ENCODE measurements at regions of chr5 and their contacts with region 1.

Region 1: DNA sequence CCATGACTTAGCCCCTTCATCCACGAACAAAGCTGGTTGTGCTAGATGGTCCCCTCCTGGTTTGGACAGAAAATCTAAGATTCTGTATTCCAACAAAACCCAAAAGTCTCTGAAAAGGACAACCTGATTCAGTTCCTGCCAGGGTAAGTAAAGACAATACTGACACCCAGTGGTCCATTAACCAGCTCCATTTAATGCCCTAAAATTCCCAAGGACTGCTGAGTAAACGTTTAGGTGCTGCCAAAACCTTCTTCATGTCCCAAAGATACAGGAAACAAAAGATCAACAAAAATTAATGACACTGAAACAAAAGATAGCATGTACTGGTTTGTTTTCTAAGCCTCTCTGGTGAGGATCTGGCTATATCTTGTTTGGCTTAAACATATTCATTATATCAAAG is 25.3 kb upstream of the PPP1R2B start:
- DNase-seq: no peak
- H3K4me3 ChIP-seq: no peak overlapping the region
- H3K27ac ChIP-seq: no peak overlapping the region
- H3K4me1 ChIP-seq: no peaks in the 10 kb centered on the region
- H3K27me3 ChIP-seq: no peaks in the 10 kb centered on the region
- CTCF ChIP-seq: peak; percentile 8 to 52 (median 34)
- EP300 ChIP-seq: no peak
- POLR2A ChIP-seq: no peak

Region 2: GRCh38 chr5:155943516-155944407 is 881.0 kb before region 1 on chr5:
- intact Hi-C with region 1: loop called (anchors 2 kb)
- DNase-seq: no peak
- H3K4me3 ChIP-seq: no peak overlapping the region
- H3K27ac ChIP-seq: no peak overlapping the region
- H3K4me1 ChIP-seq: no peaks in the 10 kb centered on the region
- H3K27me3 ChIP-seq: no peaks in the 10 kb centered on the region
- CTCF ChIP-seq: peak; percentile 15 to 81 (median 71)
- EP300 ChIP-seq: no peak
- POLR2A ChIP-seq: no peak

Region 3: GRCh38 chr5:156879665-156880285 is 55.0 kb after region 1 on chr5:
- intact Hi-C with region 1: no loop called
- DNase-seq: no peak
- H3K4me3 ChIP-seq: no peak overlapping the region
- H3K27ac ChIP-seq: no peak overlapping the region
- H3K4me1 ChIP-seq: no peaks in the 10 kb centered on the region
- H3K27me3 ChIP-seq: no peaks in the 10 kb centered on the region
- CTCF ChIP-seq: no peak
- EP300 ChIP-seq: no peak
- POLR2A ChIP-seq: no peak

Region 4: DNA sequence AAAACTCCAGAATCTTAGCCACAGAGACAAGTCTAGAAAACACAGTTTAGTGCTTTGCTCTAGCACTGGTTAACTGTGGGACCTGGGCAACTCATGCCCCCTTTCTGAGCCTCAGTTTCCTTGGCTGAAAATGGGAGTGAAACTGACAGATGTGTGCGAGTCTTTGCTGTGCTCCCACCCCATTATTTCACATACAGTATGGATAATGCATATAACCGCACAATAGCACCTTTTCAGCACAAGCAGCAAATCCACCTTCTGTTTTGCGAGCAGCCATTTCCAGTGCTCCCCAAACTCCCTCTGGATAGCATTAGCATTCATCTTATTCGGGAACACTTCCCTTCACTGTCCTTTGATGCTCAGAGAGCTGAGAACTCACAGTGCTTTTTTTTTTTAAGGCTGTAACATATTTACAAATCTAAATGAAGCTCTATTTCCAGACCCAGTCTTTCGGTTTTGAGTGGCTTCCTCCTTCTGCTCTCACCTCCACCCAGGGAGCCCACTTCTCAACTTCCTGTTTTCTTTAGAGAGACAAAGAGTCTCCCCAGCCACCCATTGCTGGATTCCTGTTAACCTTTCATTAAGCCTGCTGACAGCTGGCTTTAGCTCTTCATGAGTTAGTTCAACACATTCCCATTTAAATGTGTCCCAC is 89.0 kb after region 1 on chr5:
- intact Hi-C with region 1: no loop called
- DNase-seq: no peak
- H3K4me3 ChIP-seq: no peak overlapping the region
- H3K27ac ChIP-seq: no peak overlapping the region
- H3K4me1 ChIP-seq: no peaks in the 10 kb centered on the region
- H3K27me3 ChIP-seq: no peaks in the 10 kb centered on the region
- CTCF ChIP-seq: no peak
- EP300 ChIP-seq: no peak
- POLR2A ChIP-seq: no peak

Measured in sigmoid colon (tissue), 7 donors.